AG04449 (cell line): ENCODE measurements at regions of chr18 and their contacts with region 1.

Region 1: DNA sequence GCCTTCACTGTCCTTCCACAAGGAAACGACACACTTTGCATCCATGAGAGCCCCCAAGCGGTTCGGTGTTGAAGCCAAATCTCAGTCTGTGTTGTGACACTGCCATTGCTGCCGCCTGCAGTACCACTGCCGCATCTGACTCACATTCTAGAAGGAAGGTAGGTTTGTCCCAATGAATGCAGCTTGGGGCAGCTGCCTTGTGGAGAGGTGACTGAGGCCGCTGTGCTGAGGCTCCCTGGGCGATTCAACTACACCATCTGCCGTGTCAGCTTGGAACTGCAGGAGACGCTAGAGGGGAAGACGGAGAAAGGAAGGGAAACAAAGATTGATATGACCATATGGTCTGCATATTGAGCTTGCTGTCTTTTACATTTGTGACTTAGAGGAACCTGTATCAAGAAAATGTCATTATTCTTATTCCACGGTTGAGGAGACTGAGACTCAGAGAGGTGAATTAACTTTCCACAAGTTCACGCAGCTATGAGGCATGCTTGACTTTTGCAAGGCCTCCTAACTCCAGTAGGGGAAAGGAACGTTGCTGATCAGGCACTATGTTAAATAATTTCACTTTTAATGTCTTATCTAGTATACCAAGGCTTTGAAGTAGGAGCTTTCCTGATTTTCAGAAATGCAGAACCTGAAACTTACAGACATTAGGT is 43.5 kb upstream of the LMAN1 start:
- DNase-seq: peak; percentile 17
- H3K4me3 ChIP-seq: no peak overlapping the region
- CTCF ChIP-seq: peak; percentile 97

Region 2: GRCh38 chr18:59200787-59201186 is 201.8 kb before region 1 on chr18:
- CTCF ChIA-PET with region 1: interaction called, 33 read pairs
- POLR2A ChIA-PET with region 1: no interaction called
- DNase-seq: no peak
- H3K4me3 ChIP-seq: no peak overlapping the region
- CTCF ChIP-seq: peak; percentile 48

Region 3: DNA sequence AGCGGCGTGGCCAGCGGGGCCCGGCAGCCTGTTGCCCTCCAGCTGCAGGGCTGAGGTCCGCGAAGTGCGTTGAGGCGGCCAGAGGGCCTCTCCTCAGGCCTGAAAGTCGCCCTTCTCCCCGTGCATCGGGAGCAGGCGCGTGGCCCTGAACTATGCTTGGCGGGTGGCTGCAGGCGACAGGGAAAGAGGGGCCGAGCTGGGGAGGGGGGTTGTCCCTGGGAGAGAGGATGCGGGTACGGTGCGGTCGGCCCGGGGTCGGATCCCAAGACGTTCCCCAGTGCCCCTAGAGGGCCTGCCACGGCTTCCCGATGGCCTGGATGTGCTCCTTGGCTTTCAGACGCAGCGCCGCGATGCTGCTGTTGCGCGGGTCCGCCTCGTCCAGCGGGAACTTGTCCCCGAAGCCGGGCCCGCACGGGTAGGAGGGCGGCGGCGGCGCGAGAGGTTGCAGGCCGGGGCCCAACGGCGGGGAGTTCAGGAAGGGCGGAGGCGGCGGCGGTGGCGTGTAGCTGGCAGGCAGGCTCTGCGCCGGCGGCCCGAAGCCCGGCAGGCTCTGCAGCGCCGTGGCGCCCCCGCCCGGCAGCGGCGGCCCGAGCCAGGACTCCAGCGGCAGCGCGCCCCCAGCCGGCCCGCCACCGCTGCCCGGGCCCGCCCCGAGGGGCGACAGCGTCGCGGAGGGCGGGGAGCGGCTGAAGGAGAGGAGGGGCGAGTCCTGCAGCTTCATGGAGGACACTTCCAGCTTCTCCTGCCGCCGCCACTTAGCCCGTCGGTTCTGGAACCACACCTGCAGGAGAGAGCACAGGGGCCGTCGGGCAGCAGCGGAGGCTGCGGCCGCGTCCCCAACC is 133.6 kb before region 1 on chr18:
- CTCF ChIA-PET with region 1: interaction called, 29 read pairs
- POLR2A ChIA-PET with region 1: no interaction called
- DNase-seq: no peak
- H3K4me3 ChIP-seq: no peak overlapping the region
- CTCF ChIP-seq: no peak

Region 4: DNA sequence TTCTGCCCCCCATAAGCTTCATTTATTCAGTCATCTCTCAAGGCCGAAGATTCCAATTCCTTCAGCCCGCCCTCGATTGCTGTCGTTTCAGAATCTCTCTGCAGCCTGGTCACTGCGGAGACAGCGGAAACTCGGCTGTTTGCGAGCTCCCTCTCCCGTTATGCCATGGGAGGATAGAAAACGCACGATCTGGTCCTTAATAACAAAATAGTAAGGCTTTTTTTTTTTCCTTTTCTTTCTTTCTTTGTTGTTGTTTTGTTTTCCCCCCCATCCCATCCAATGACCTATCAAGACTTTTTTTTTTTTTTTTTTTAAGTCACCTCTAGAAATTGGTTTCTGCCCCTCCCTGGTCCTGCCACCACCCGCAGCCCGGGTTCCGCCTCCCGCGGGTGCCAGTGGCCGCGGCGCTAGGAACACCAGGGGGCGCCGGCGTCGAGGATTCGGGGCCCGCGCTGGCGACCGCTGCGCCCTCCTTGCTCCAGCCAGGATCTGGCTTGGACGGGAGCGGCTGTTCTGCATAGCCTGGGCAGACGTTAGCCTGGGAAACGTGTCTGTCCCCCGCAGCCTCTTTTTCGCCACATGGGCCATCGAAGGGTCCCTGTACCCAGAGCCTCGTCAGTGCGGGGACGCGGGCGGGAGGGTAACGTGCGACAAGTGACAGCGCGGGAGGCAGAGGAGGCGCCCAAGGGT is 94.2 kb before region 1 on chr18:
- CTCF ChIA-PET with region 1: interaction called, 186 read pairs
- POLR2A ChIA-PET with region 1: no interaction called
- DNase-seq: no peak
- H3K4me3 ChIP-seq: peak overlapping the region; percentile 48
- CTCF ChIP-seq: peak; percentile 97

Region 5: GRCh38 chr18:59387687-59388565 is 14.6 kb before region 1 on chr18:
- CTCF ChIA-PET with region 1: interaction called, 24 read pairs
- POLR2A ChIA-PET with region 1: no interaction called
- DNase-seq: no peak
- H3K4me3 ChIP-seq: no peak overlapping the region
- CTCF ChIP-seq: no peak